ENCODE measurements at regions of chr10 and their contacts with region 1.

Region 1: DNA sequence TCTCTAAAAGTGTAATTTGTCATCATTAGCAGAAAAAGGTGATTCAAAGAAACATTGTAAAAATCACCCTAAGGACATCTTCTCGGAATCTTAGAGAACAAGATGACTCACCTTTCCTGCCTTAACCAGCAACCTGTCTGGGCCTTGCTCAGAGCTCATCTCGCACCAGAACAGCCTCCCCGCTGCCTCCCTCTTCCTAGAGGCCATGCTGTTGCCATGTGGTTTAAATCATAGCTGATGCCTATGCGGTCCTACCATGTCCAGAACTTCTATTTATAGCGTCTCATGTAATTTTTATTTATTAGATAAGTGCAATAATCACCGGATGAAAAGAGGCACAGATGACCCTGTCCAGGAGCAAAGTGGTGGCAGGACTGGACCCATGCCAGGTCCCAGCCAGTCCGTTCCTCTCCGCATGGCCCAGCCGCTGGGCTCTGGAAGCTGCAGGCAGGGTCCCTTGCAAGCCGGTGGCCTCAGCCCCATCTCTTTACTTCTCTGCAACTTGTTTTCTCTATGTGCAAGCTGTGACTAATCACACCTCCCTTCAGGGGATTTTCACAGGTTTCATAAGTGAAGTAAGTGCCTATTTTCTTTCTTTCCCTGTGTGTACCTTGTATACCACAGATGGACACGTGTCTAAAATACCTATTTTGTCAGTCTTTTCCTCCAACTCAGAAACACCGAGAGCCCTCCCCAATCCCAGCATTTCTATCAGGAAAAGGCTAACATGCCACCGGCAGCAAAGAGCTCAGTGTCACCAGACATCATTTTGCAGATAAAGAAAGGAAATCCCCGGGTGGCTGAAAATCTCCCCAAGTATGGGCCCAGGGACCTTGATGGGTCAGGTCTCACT is 27.1 kb downstream of the KLF6 start:
- DNase-seq: peak; percentile 84
- H3K4me3 Mint-ChIP-seq: peak overlapping the region; percentile 71
- H3K27ac Mint-ChIP-seq: peak overlapping the region; percentile 100
- H3K4me1 Mint-ChIP-seq: peaks cover 83% of the 10 kb centered on the region
- H3K27me3 Mint-ChIP-seq: no peaks in the 10 kb centered on the region

Region 2: DNA sequence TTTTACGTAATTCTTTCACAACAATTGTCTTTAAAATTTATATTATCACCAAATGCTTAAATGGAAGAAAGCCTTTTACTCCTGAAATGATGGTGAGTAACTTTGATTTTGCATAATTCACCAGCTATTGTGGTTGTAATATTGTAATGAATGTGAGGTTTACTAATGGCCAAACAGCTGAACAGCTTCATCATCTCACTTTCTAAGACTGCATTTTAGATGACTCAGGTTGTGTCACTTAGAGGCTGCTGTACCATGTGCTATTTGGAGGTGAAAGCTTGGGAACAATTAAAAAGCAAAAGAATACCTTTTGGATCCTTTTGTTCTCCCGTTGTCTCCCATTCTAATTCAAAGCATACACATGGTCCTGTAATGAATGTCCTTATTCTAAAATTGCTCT is 1294.6 kb before region 1 on chr10:
- CTCF ChIA-PET with region 1: no interaction called
- POLR2A ChIA-PET with region 1: no interaction called
- intact Hi-C with region 1: no loop called
- DNase-seq: no peak
- H3K4me3 Mint-ChIP-seq: no peak overlapping the region
- H3K27ac Mint-ChIP-seq: no peak overlapping the region
- H3K4me1 Mint-ChIP-seq: no peaks in the 10 kb centered on the region
- H3K27me3 Mint-ChIP-seq: peaks cover 2% of the 10 kb centered on the region

Region 3: DNA sequence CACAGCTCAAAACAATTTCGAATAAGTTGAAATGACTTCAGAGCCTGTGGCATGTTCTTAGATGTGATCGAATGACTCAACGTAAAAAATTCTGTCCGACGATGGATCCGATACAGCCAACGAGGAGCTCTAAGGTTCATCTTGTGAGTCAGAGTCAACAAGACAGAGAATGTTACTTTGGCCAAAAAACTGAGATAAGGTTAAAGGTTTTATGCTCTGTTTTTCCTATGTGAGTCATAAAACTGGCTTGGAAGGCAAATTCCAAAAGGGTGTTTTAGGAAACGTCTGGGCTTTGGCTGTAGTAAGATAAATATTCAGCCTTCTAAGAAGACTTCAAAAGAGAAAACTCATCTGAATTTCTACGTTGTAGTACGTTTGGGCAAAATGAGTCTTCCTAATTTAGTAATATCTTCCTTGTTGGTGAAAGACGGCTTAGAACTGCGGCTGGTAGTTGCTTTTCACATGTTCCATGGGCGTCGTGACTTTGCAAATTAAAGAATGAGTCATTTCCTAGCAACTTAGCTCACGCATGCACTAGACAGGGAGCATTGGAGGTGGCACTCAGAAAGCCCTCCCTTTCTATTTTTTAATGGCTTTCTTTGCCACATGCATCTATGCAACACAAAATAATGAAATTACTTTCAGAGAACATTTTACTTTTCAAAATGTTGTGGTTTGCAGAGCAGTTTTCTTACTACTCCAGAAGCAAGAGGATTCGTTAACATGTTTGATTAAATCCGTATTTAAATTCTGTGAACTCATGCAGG is 662.3 kb before region 1 on chr10:
- CTCF ChIA-PET with region 1: no interaction called
- POLR2A ChIA-PET with region 1: no interaction called
- intact Hi-C with region 1: loop called (anchors 1 kb)
- DNase-seq: peak; percentile 80
- H3K4me3 Mint-ChIP-seq: peak overlapping the region; percentile 17
- H3K27ac Mint-ChIP-seq: peak overlapping the region; percentile 87
- H3K4me1 Mint-ChIP-seq: peaks cover 74% of the 10 kb centered on the region
- H3K27me3 Mint-ChIP-seq: no peaks in the 10 kb centered on the region

Region 4: GRCh38 chr10:3482200-3483138 is 275.4 kb before region 1 on chr10:
- CTCF ChIA-PET with region 1: no interaction called
- POLR2A ChIA-PET with region 1: no interaction called
- intact Hi-C with region 1: loop called (anchors 5 kb)
- DNase-seq: peak; percentile 30
- H3K4me3 Mint-ChIP-seq: no peak overlapping the region
- H3K27ac Mint-ChIP-seq: peak overlapping the region; percentile 2
- H3K4me1 Mint-ChIP-seq: peaks cover 43% of the 10 kb centered on the region
- H3K27me3 Mint-ChIP-seq: peaks cover 2% of the 10 kb centered on the region

Region 5: GRCh38 chr10:3668276-3668965 is 89.4 kb before region 1 on chr10:
- CTCF ChIA-PET with region 1: no interaction called
- POLR2A ChIA-PET with region 1: interaction called, 3 read pairs
- intact Hi-C with region 1: loop called (anchors 5 kb)
- DNase-seq: peak; percentile 76
- H3K4me3 Mint-ChIP-seq: peak overlapping the region; percentile 72
- H3K27ac Mint-ChIP-seq: peak overlapping the region; percentile 79
- H3K4me1 Mint-ChIP-seq: peaks cover 38% of the 10 kb centered on the region
- H3K27me3 Mint-ChIP-seq: no peaks in the 10 kb centered on the region

Region 6: DNA sequence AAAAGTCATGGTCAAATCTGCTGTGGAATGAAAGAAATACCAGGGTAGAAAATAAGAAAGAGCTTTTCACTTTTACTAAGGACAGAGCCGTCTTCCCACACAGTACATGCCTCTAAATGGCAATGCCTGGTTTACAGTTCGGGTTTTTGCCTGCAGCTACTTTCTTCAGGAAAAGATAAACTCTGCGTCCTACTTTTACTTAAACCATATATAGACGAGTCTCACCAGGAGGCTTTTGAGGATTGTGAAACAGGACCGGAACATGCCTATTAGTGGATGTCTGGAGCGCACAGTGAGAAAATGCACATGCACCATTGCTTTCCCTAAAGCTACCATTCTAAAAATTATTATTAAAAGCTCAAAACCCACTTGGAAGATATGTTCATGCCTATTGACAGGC is 43.3 kb before region 1 on chr10:
- CTCF ChIA-PET with region 1: no interaction called
- POLR2A ChIA-PET with region 1: no interaction called
- intact Hi-C with region 1: no loop called
- DNase-seq: no peak
- H3K4me3 Mint-ChIP-seq: no peak overlapping the region
- H3K27ac Mint-ChIP-seq: no peak overlapping the region
- H3K4me1 Mint-ChIP-seq: peaks cover 22% of the 10 kb centered on the region
- H3K27me3 Mint-ChIP-seq: peaks cover 2% of the 10 kb centered on the region

Region 7: DNA sequence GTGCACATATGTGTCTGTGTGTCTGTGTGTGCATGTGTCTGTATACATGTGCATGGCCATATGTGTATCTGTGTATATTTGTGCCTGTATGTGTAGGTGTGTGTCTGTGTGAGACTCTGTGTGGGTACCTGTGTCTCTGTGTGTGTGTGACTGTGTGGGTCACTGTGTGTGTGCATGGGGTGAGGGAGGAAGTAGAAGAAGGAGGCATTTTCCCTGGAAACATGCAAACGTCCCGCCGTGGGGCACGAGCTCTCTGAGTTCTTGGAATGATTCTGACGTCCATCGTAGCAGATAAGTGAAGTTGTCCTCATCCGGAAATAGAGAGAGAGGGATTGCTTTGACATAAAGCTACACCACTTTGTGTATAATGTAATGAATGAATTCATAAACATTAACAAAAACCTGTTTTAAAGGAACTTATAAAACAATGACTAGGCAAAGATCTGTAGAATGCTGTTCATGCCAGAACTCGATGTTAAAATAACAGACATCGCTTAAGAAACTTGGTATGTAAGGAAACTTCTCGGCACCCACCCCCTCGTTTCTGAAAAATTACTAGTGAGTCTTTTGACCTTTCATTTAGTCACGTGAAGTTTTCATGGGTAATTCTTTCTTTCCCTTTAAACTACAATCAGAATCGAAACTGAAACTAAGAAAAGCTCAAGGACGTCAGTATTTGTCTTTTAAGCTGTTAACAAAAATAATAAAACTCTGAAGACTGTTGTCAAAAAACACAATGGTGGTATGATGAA is 70.7 kb after region 1 on chr10:
- CTCF ChIA-PET with region 1: no interaction called
- POLR2A ChIA-PET with region 1: no interaction called
- intact Hi-C with region 1: loop called (anchors 2 kb)
- DNase-seq: peak; percentile 70
- H3K4me3 Mint-ChIP-seq: peak overlapping the region; percentile 56
- H3K27ac Mint-ChIP-seq: peak overlapping the region; percentile 97
- H3K4me1 Mint-ChIP-seq: peaks cover 63% of the 10 kb centered on the region
- H3K27me3 Mint-ChIP-seq: no peaks in the 10 kb centered on the region

Region 8: GRCh38 chr10:4656576-4657182 is 898.8 kb after region 1 on chr10:
- CTCF ChIA-PET with region 1: no interaction called
- POLR2A ChIA-PET with region 1: no interaction called
- intact Hi-C with region 1: loop called (anchors 5 kb)
- DNase-seq: peak; percentile 63
- H3K4me3 Mint-ChIP-seq: no peak overlapping the region
- H3K27ac Mint-ChIP-seq: no peak overlapping the region
- H3K4me1 Mint-ChIP-seq: peaks cover 16% of the 10 kb centered on the region
- H3K27me3 Mint-ChIP-seq: peaks cover 6% of the 10 kb centered on the region